ENCODE measurements at regions of chr9 and their contacts with region 1.

Region 1: DNA sequence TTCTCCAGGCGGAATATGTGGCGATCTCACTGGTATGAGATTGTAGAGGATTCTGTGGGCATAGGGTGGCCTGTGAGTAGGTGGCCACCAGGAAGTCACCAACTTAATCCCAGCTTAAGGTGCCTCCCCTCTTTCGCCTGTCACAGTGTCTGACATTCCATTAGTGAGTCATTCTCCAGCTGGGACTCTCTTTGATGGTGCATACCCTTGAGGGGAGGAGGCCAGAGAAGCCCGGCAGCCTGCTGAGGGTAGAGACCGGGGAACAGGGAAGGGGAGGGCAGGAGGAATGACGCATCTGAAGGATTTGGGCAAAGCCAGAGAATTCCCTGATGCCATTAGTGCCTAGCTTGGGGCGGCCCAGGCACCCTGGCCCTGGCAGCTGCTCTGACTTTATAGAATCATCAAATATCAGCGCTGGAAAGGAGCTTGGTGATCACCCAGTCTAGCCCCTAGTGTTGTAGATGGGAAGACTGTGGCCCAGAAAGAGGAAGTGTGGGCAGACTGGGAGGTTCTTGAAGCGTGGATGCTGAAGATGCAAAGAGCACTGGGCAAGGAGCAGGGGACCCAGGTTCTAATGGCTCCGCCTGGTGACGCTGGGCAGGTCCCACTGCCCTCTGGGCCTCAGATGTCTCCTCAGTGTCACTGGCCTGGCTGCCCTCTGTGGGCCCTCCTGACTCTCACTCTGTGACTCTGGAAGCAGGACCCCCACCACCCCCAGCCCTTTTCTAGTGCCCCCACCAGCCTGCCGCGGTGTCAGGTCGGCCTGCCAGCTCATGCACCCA is 41.4 kb downstream of the DAB2IP start:
- DNase-seq: no peak
- H3K4me3 ChIP-seq: no peak overlapping the region
- H3K27ac ChIP-seq: no peak overlapping the region
- H3K4me1 ChIP-seq: peaks cover 10% of the 10 kb centered on the region
- H3K27me3 ChIP-seq: no peaks in the 10 kb centered on the region
- CTCF ChIP-seq: no peak

Region 2: DNA sequence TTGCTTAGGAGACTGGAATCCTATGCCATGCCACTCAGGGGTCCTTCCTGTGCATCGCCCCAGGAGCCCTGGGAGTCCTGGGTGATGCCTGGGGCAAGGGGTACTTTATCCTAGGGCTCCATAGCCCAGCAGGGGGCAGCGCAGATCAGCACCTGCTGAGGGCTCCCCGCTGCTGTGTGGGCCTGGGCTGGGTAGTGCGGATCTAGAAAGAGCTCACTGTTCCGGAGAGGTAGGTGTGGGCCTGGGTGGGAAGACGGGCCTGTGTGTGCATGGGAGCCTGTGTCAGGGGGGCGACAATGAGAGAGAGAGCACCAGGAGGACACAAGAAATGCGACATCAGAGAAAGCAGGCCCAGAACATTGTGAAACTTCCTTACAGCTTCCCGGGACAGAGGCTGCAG is 52.7 kb before region 1 on chr9:
- CTCF ChIA-PET with region 1: no interaction called
- dilution Hi-C with region 1: loop called (anchors 5 kb)
- in situ Hi-C with region 1: no loop called
- intact Hi-C with region 1: no loop called
- DNase-seq: no peak
- H3K4me3 ChIP-seq: no peak overlapping the region
- H3K27ac ChIP-seq: no peak overlapping the region
- H3K4me1 ChIP-seq: peaks cover 23% of the 10 kb centered on the region
- H3K27me3 ChIP-seq: no peaks in the 10 kb centered on the region
- CTCF ChIP-seq: peak; percentile 26 to 55

Region 3: DNA sequence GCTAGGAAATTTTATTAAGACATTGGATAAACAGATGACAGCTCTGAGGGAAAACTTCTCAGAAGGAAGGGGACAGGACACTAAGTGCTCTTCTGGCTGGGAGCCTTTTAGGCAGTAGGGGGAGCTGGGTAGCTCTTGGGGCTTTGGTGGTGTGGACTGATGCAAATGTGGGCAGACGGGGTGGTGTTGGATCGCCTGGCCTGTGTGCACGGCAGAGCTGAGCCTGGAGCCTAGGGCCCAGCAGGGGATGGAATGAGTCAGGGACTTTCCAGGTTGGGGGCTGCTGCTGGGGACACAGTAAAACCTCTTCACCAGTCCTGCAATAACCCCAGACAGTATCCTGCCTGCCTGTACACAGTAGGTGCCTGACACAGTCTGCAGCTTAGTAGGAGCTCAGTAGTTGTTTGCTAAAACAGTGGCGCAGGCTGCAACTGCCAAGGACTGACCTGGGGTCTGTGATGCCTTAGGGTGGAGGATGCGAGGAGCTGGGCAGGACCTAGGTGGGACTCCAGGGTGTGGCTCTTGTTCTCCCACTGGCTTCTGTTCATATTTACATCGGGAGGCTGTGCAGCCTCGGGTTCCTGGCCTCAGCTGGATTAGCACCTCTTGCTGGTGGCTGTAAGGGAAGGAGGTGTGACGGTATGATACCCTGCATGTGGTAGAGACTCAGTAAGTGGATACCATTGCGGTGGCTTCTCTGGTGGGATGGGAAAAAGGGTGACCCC is 42.4 kb after region 1 on chr9:
- CTCF ChIA-PET with region 1: no interaction called
- dilution Hi-C with region 1: loop called (anchors 5 kb)
- in situ Hi-C with region 1: no loop called
- intact Hi-C with region 1: no loop called
- DNase-seq: peak; percentile 70
- H3K4me3 ChIP-seq: no peak overlapping the region
- H3K27ac ChIP-seq: peak overlapping the region; percentile 68
- H3K4me1 ChIP-seq: peaks cover 69% of the 10 kb centered on the region
- H3K27me3 ChIP-seq: no peaks in the 10 kb centered on the region
- CTCF ChIP-seq: peak; percentile 50 to 73

Region 4: DNA sequence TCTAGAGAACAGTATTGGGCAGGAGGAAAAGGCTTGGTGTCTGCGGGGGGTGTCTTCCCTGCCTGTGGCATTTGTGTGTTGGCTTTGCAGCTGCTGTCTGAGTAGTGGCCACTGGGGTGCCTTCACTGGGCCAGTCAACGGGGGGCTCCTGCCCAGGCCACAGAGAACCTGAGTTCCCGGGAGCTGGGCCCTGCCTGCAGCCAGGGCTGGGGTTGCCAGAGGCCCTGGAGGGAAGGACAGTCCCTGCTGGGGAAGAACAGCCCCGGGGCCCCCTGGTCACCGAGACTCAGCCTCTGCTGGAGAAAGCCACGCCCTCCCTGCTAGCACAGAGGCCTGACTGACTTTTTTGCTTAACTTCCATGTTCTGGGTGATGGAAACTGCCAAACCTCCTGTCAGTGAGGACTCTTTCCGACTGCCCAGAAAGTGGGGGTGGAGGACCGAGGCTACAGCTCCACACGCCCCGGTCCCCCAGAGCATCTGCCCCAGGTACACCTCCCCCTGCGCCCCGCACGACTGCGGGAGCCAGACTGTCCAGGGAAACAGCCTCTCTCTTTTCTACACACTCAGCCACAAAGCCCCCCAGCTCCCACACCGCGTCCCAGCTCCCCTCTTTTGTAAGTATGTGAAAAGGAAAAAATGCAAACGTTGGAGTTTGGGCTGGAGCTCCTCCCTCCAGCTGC is 92.1 kb after region 1 on chr9:
- CTCF ChIA-PET with region 1: no interaction called
- dilution Hi-C with region 1: loop called (anchors 5 kb)
- in situ Hi-C with region 1: no loop called
- intact Hi-C with region 1: no loop called
- DNase-seq: no peak
- H3K4me3 ChIP-seq: no peak overlapping the region
- H3K27ac ChIP-seq: no peak overlapping the region
- H3K4me1 ChIP-seq: no peaks in the 10 kb centered on the region
- H3K27me3 ChIP-seq: no peaks in the 10 kb centered on the region
- CTCF ChIP-seq: no peak